ENCODE measurements at regions of chr14 and their contacts with region 1.

Region 1: GRCh38 chr14:81710234-81710845 is 176.7 kb upstream of the SEL1L start:
- DNase-seq: no peak
- ATAC-seq: no peak
- H3K4me3 ChIP-seq: no peak overlapping the region
- H3K27ac ChIP-seq: no peak overlapping the region
- H3K4me1 ChIP-seq: no peaks in the 10 kb centered on the region
- H3K27me3 ChIP-seq: peaks cover 0 to 4% (median 0%) of the 10 kb centered on the region in 9 donors
- CTCF ChIP-seq: peak; percentile 36 to 67 (median 58)
- POLR2A ChIP-seq: no peak

Region 2: GRCh38 chr14:81751198-81751597 is 40.9 kb after region 1 on chr14:
- intact Hi-C with region 1: no loop called
- DNase-seq: peak in 2 of 5 donors; percentile 38 to 47
- ATAC-seq: peak in 3 of 4 donors; percentile 64 to 92 (median 85)
- H3K4me3 ChIP-seq: no peak overlapping the region
- H3K27ac ChIP-seq: no peak overlapping the region
- H3K4me1 ChIP-seq: no peaks in the 10 kb centered on the region
- H3K27me3 ChIP-seq: no peaks in the 10 kb centered on the region
- CTCF ChIP-seq: no peak
- POLR2A ChIP-seq: no peak

Region 3: GRCh38 chr14:81971911-81972310 is 261.6 kb after region 1 on chr14:
- intact Hi-C with region 1: loop called in 1 of 10 experiments (anchors 10 kb)
- DNase-seq: no peak
- ATAC-seq: no peak
- H3K4me3 ChIP-seq: no peak overlapping the region
- H3K27ac ChIP-seq: no peak overlapping the region
- H3K4me1 ChIP-seq: no peaks in the 10 kb centered on the region
- H3K27me3 ChIP-seq: no peaks in the 10 kb centered on the region
- CTCF ChIP-seq: no peak
- POLR2A ChIP-seq: no peak

Region 4: DNA sequence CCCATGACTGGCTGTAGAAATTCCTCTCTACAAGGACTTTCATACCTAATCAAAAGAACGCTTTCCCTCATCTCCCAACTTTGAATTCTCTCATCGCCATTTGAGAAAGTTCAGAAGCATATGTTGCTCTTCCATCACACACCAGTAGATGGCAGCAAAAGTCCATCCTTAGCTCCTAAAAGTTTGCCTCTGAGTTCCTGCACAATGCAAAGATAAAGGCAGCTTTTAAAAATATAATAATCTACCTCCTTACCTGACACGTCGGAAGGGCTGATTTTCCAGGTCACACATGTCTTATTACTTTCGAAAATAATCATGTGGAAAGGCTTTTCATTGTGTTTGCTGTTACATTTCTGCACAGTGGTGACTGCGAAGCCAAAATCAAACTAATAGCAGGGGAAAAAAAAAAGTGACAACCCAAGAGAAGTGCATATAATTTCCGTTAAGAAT is 280.0 kb after region 1 on chr14:
- intact Hi-C with region 1: loop called in 3 of 10 experiments (anchors 5 to 10 kb)
- DNase-seq: peak in 3 of 5 donors; percentile 18 to 30 (median 18)
- ATAC-seq: no peak
- H3K4me3 ChIP-seq: no peak overlapping the region
- H3K27ac ChIP-seq: no peak overlapping the region
- H3K4me1 ChIP-seq: no peaks in the 10 kb centered on the region
- H3K27me3 ChIP-seq: peaks cover 0 to 5% (median 0%) of the 10 kb centered on the region in 9 donors
- CTCF ChIP-seq: peak; percentile 77 to 95 (median 83)
- POLR2A ChIP-seq: no peak